ENCODE measurements at regions of chr1 and their contacts with region 1.

Region 1: GRCh38 chr1:207885129-207886032 is 25.5 kb downstream of the CD34 start:
- DNase-seq: peak; percentile 94
- H3K4me3 Mint-ChIP-seq: no peak overlapping the region
- H3K27ac Mint-ChIP-seq: no peak overlapping the region
- H3K4me1 Mint-ChIP-seq: peaks cover 40% of the 10 kb centered on the region
- H3K27me3 Mint-ChIP-seq: peaks cover 16% of the 10 kb centered on the region
- CTCF ChIP-seq: peak; percentile 100

Region 2: GRCh38 chr1:207828485-207829158 is 56.8 kb before region 1 on chr1:
- CTCF ChIA-PET with region 1: interaction called, 181 read pairs
- POLR2A ChIA-PET with region 1: interaction called, 8 read pairs
- intact Hi-C with region 1: loop called (anchors 1 kb)
- DNase-seq: peak; percentile 96
- H3K4me3 Mint-ChIP-seq: no peak overlapping the region
- H3K27ac Mint-ChIP-seq: peak overlapping the region; percentile 96
- H3K4me1 Mint-ChIP-seq: peaks cover 78% of the 10 kb centered on the region
- H3K27me3 Mint-ChIP-seq: no peaks in the 10 kb centered on the region
- CTCF ChIP-seq: peak; percentile 99

Region 3: DNA sequence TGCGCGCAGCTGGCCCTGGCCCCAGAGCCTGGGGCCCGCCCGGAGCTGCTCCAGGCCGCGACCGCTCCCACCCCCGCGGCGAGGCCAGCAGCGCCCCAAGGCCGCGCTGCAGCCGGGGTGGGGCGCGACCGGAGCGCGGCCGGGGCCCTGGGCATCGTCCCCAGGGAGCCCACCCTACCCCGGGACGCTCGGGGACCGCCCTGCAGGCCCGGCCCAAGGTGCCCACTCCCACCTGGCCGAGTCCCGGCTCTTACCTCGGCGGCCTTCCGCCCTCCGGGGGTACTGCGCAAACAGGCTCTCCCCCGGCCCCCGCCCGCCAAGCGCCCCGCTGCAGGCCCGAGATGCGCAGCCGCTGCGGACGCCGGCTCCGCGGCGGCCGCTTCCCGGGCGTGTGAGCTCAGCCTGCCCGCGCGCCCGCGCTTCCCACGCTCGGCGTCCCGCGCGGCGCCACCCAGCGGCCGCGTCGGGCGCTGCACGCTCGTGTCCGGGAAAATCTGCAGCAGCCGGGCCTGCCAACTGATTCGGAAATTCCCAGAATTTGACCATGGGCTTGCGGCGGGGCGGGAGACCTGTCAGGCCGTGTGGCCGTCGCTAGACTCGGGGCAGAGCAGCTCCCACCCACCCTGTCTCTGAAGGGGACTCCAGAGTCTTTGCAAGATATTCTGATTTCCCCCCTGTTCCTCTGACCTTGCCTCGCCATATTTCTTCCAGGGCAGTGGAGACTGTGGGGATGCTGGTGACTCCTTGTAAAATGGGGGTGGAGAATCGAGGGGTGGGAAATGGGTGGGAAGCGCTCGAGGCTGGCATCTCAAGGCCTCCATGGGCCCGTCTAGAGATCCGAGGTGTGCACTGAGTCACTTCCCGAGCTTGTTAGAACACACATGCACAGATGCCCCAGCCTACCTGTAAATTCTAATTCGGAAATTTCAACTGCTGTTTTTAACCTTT is 16.3 kb before region 1 on chr1:
- CTCF ChIA-PET with region 1: interaction called, 390 read pairs
- POLR2A ChIA-PET with region 1: interaction called, 63 read pairs
- intact Hi-C with region 1: no loop called
- DNase-seq: peak; percentile 89
- H3K4me3 Mint-ChIP-seq: peak overlapping the region; percentile 84
- H3K27ac Mint-ChIP-seq: peak overlapping the region; percentile 32
- H3K4me1 Mint-ChIP-seq: peaks cover 29% of the 10 kb centered on the region
- H3K27me3 Mint-ChIP-seq: no peaks in the 10 kb centered on the region
- CTCF ChIP-seq: peak; percentile 99

Region 4: GRCh38 chr1:207925210-207925609 is 39.8 kb after region 1 on chr1:
- CTCF ChIA-PET with region 1: interaction called, 13 read pairs
- POLR2A ChIA-PET with region 1: no interaction called
- intact Hi-C with region 1: no loop called
- DNase-seq: no peak
- H3K4me3 Mint-ChIP-seq: no peak overlapping the region
- H3K27ac Mint-ChIP-seq: no peak overlapping the region
- H3K4me1 Mint-ChIP-seq: no peaks in the 10 kb centered on the region
- H3K27me3 Mint-ChIP-seq: peaks cover 33% of the 10 kb centered on the region
- CTCF ChIP-seq: no peak

Region 5: DNA sequence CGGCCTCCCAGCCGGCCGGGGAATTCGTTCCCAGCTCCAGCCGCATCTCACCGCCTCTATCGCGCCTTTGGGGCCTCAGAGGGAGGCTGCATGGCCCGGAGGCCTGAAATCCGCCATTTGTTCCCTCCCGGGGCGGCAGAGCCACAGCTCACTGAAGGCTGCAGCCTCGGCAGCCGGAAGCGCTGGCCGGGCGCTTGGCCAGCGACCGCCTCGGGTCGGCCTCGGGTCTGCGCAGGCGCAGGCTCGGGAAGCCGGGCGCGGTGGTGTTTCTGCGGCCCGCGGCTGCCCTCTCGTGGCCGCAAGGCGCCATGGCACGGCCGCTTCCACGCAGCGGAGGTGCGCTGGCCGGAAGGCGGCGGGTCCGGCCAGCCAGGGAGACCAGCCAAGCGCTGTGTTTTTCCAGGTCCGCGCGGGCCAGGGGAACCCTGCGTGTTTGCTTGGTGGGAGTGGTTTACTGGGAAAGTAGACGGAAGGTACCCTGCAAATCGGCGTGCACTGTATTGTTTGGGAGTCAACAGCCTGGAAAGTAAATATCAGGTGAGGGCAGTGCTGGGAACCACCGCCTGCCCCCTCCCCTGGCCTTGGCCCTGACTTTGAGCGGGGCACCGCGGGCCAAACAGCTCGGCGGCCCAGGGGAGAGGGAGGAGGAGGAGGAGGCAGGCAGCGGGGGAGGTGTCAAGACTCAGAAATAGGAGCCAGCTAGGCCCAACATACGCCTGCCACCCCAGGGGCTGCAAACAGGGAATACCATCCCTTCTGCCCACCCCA is 78.2 kb after region 1 on chr1:
- CTCF ChIA-PET with region 1: interaction called, 405 read pairs
- POLR2A ChIA-PET with region 1: interaction called, 96 read pairs
- intact Hi-C with region 1: loop called (anchors 1 kb)
- DNase-seq: peak; percentile 95
- H3K4me3 Mint-ChIP-seq: peak overlapping the region; percentile 69
- H3K27ac Mint-ChIP-seq: peak overlapping the region; percentile 57
- H3K4me1 Mint-ChIP-seq: peaks cover 27% of the 10 kb centered on the region
- H3K27me3 Mint-ChIP-seq: no peaks in the 10 kb centered on the region
- CTCF ChIP-seq: peak; percentile 100

Region 6: DNA sequence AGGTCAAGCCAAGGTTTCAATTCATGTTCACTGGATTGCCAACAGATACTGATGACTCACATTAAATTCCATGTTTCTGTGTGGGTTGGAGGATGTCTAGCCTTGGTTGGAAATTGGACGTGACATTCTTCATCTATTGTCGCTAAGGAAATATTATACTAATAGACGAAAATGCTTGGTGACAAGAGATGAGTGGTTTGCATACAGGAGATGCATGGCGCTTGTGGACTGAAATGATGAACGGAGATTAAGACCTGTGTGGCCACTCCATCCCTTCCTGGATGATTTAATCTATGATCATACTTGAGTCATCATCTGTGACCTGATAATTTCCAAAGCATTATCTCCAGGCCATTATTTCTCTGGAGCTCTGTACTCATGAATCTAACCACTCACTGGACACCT is 122.6 kb after region 1 on chr1:
- CTCF ChIA-PET with region 1: interaction called, 34 read pairs
- POLR2A ChIA-PET with region 1: interaction called, 3 read pairs
- intact Hi-C with region 1: no loop called
- DNase-seq: peak; percentile 82
- H3K4me3 Mint-ChIP-seq: no peak overlapping the region
- H3K27ac Mint-ChIP-seq: no peak overlapping the region
- H3K4me1 Mint-ChIP-seq: peaks cover 18% of the 10 kb centered on the region
- H3K27me3 Mint-ChIP-seq: no peaks in the 10 kb centered on the region
- CTCF ChIP-seq: no peak

Region 7: GRCh38 chr1:208280681-208281450 is 395.5 kb after region 1 on chr1:
- CTCF ChIA-PET with region 1: no interaction called
- POLR2A ChIA-PET with region 1: no interaction called
- intact Hi-C with region 1: no loop called
- DNase-seq: no peak
- H3K4me3 Mint-ChIP-seq: no peak overlapping the region
- H3K27ac Mint-ChIP-seq: no peak overlapping the region
- H3K4me1 Mint-ChIP-seq: no peaks in the 10 kb centered on the region
- H3K27me3 Mint-ChIP-seq: peaks cover 81% of the 10 kb centered on the region
- CTCF ChIP-seq: no peak